ENCODE measurements at regions of chr11 and their contacts with region 1.

Region 1: GRCh38 chr11:78564490-78565467 is 9.9 kb downstream of the NARS2 start:
- DNase-seq: no peak
- CTCF ChIP-seq: peak; percentile 63

Region 2: DNA sequence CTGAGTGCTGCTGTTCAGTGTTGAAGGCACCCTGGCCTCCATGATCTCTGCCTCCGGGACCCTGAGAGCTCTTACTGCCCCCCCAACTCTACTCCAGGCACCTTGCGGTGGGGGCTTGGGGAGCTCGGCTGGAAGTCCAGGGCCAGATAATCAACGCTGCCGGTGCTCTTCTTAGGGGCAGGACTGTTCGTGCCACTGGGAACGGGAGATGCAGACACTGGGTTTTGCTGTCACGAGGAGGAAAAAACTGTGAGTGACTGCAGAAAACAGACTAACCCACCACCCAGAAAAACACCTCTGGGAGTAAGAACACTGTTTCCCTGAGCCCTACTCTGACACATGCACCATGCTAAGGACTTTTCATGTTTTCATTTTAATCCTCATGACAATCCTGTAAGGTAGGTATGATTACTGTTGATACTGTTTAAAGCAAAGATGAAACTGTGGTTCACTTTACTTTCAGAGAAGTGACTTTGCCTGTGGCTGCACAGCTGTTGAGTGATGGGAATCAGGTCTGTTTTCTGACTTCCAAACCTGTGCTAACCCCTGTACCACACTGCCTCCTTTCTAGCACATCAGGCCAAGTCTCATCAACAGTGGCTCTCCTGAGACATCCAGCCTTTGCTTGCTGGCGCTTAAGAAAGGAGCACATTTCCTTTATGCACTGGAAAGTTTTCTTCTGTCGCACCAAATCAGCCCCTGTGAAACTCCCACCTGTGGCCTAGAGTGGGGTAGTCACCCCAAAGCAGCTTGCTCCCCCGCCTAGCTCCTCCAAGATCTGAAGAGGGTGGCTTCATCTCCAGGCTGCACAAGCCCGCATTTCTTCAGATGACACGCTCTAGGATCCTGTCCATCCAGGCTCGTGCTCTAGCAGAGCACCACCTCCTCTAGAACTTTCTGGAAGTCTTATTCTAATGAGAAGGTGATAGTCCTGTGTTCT is 344.3 kb before region 1 on chr11:
- CTCF ChIA-PET with region 1: interaction called, 11 read pairs
- POLR2A ChIA-PET with region 1: no interaction called
- DNase-seq: no peak
- CTCF ChIP-seq: no peak

Region 3: DNA sequence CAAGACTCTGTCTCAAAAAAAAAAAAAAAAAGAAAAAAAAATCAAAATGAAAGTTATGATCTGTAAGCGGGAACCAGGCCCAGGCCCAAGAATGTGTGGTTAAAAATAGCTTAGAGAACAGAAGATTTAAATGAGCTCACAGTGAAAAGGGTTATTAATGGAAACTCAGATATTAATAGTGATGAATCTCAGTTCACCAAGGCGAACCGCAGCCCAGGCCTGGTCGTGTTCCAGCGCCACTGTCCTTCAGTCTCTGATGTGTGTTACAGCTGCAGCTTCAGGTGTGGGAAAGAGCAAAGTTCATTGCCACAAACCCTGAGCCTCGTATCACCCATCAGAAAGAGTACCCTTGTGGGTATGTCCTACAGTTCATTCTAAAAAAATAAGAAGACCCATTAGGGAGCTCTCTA is 254.3 kb before region 1 on chr11:
- CTCF ChIA-PET with region 1: interaction called, 10 read pairs
- POLR2A ChIA-PET with region 1: no interaction called
- DNase-seq: peak; percentile 79
- CTCF ChIP-seq: no peak

Region 4: DNA sequence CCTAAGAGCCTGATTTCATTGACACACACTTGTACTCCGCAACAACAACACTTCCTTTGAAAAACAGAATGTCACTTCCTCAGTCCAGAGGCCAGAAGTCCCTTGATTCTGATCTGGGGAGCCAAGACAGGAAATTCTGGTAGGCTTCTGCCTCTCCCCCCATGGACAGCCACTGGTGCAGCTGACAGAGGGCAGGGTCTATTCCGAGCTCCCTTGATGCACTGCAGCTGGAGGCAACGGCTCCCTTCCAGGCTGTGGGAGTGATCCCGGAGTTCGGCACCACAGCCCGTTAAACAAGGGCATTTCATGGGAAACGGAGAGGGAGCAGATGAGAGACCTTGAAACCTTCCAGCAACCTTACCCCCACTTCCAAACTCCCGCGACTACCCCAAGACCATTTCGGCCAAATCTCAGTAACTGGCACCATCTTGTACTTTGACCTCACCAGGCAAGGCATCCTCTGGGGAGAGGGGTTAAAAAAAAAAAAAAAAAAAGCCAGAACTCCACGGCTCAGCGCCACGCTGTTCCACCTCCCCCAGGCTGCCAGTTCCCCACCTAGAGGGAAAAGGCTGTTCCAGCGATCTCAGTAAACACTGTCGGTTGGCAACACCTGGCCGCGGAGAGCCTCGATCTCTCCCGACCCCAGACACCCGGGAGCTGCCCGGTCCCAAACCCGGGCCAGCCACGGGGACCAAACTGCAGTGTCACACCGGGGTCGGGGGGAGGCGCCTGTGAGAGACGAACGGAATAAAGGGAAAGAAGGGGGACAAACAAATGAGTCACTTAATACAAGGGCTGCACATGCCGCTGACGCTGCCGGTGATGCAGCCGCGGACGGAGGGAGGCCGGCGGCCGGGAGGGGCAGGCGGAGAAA is 148.2 kb before region 1 on chr11:
- CTCF ChIA-PET with region 1: interaction called, 101 read pairs
- POLR2A ChIA-PET with region 1: no interaction called
- DNase-seq: peak; percentile 84
- CTCF ChIP-seq: peak; percentile 56

Region 5: GRCh38 chr11:78465169-78465942 is 99.4 kb before region 1 on chr11:
- CTCF ChIA-PET with region 1: interaction called, 17 read pairs
- POLR2A ChIA-PET with region 1: no interaction called
- DNase-seq: peak; percentile 84
- CTCF ChIP-seq: no peak

Region 6: DNA sequence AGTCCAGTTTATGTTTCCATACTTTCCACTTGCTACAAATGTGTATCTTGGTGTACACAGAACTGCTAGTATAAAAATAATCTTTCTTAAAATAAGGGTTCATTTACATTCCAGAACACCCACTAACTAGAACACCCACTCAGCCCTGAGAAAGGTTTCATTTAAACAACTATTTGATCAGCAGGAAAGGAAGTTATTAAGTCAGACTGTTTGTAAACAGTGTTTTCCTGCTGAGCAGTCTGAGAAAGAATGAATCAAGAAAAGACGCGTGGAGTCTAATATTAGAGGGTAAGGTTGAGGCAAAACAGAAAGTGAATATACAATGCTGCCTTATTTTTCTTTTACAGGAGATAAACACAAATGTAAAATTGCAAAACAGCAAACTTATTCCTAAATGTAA is 22.8 kb before region 1 on chr11:
- CTCF ChIA-PET with region 1: interaction called, 21 read pairs
- POLR2A ChIA-PET with region 1: no interaction called
- DNase-seq: peak; percentile 34
- CTCF ChIP-seq: no peak